Activated CD4-positive, alpha-beta memory T cell treated with anti-CD3 and anti-CD28 coated beads for 36 hours (primary cell): ENCODE measurements at regions of chr10 and their contacts with region 1.

Region 1: GRCh38 chr10:99620713-99621453 is 644 bp upstream of the SLC25A28 start:
- DNase-seq: peak; percentile 95
- H3K4me3 Mint-ChIP-seq: peak overlapping the region; percentile 80
- H3K27ac Mint-ChIP-seq: peak overlapping the region; percentile 96
- H3K4me1 Mint-ChIP-seq: peaks cover 37% of the 10 kb centered on the region
- H3K27me3 Mint-ChIP-seq: no peaks in the 10 kb centered on the region

Region 2: GRCh38 chr10:98134431-98135221 is 1486.3 kb before region 1 on chr10 and contains the start of gene R3HCC1L:
- CTCF ChIA-PET with region 1: no interaction called
- POLR2A ChIA-PET with region 1: no interaction called
- intact Hi-C with region 1: loop called (anchors 1 kb)
- DNase-seq: peak; percentile 97
- H3K4me3 Mint-ChIP-seq: peak within 1 kb of the TSS; percentile 94
- H3K27ac Mint-ChIP-seq: peak within 1 kb of the TSS; percentile 85
- H3K4me1 Mint-ChIP-seq: peaks cover 43% of the 10 kb centered on the region
- H3K27me3 Mint-ChIP-seq: no peaks in the 10 kb centered on the region
- total RNA-seq, gene R3HCC1L: 13.2 to 13.3 TPM

Region 3: GRCh38 chr10:99435986-99436638 is 184.8 kb before region 1 on chr10:
- CTCF ChIA-PET with region 1: interaction called, 106 read pairs
- POLR2A ChIA-PET with region 1: interaction called, 24 read pairs
- intact Hi-C with region 1: no loop called
- DNase-seq: no peak
- H3K4me3 Mint-ChIP-seq: no peak overlapping the region
- H3K27ac Mint-ChIP-seq: no peak overlapping the region
- H3K4me1 Mint-ChIP-seq: peaks cover 18% of the 10 kb centered on the region
- H3K27me3 Mint-ChIP-seq: no peaks in the 10 kb centered on the region

Region 4: GRCh38 chr10:99711129-99711719 is 90.3 kb after region 1 on chr10:
- CTCF ChIA-PET with region 1: interaction called, 3 read pairs
- POLR2A ChIA-PET with region 1: interaction called, 3 read pairs
- intact Hi-C with region 1: loop called (anchors 1 kb)
- DNase-seq: peak; percentile 31
- H3K4me3 Mint-ChIP-seq: no peak overlapping the region
- H3K27ac Mint-ChIP-seq: no peak overlapping the region
- H3K4me1 Mint-ChIP-seq: peaks cover 11% of the 10 kb centered on the region
- H3K27me3 Mint-ChIP-seq: no peaks in the 10 kb centered on the region

Region 5: GRCh38 chr10:100009793-100010676 is 389.2 kb after region 1 on chr10 and contains the start of gene DNMBP:
- CTCF ChIA-PET with region 1: interaction called, 3 read pairs
- POLR2A ChIA-PET with region 1: no interaction called
- intact Hi-C with region 1: loop called (anchors 2 kb)
- DNase-seq: peak; percentile 86
- H3K4me3 Mint-ChIP-seq: peak within 1 kb of the TSS; percentile 86
- H3K27ac Mint-ChIP-seq: no peak within 1 kb of the TSS
- H3K4me1 Mint-ChIP-seq: peaks cover 46% of the 10 kb centered on the region
- H3K27me3 Mint-ChIP-seq: peaks cover 10% of the 10 kb centered on the region
- total RNA-seq, gene DNMBP: 2.1 to 2.2 TPM

Region 6: GRCh38 chr10:100185364-100186252 is 564.7 kb after region 1 on chr10 and contains the start of gene ERLIN1:
- CTCF ChIA-PET with region 1: no interaction called
- POLR2A ChIA-PET with region 1: no interaction called
- intact Hi-C with region 1: loop called (anchors 5 kb)
- DNase-seq: peak; percentile 96
- H3K4me3 Mint-ChIP-seq: peak within 1 kb of the TSS; percentile 90
- H3K27ac Mint-ChIP-seq: peak within 1 kb of the TSS; percentile 92
- H3K4me1 Mint-ChIP-seq: peaks cover 55% of the 10 kb centered on the region
- H3K27me3 Mint-ChIP-seq: no peaks in the 10 kb centered on the region
- total RNA-seq, gene ERLIN1: 15.4 to 16.8 TPM